ENCODE measurements at regions of chr21 and their contacts with region 1.

Region 1: GRCh38 chr21:38819714-38820183 is 14.0 kb downstream of the ETS2 start:
- DNase-seq: peak in 1 of 3 donors; percentile 50
- ATAC-seq: no peak
- H3K4me3 ChIP-seq: no peak overlapping the region
- H3K27ac ChIP-seq: peak overlapping the region; percentile 82 to 97 (median 97)
- H3K4me1 ChIP-seq: peaks cover 0 to 58% (median 25%) of the 10 kb centered on the region in 4 donors
- H3K27me3 ChIP-seq: no peaks in the 10 kb centered on the region
- CTCF ChIP-seq: no peak
- POLR2A ChIP-seq: no peak

Region 2: GRCh38 chr21:38733973-38734546 is 85.7 kb before region 1 on chr21:
- intact Hi-C with region 1: loop called in 1 of 2 experiments (anchors 10 kb)
- DNase-seq: peak; percentile 87 to 90 (median 88)
- ATAC-seq: peak; percentile 94 to 99 (median 97)
- H3K4me3 ChIP-seq: peak overlapping the region in 1 of 3 donors; percentile 17
- H3K27ac ChIP-seq: peak overlapping the region; percentile 35 to 63 (median 41)
- H3K4me1 ChIP-seq: peaks cover 0 to 3% (median 0%) of the 10 kb centered on the region in 4 donors
- H3K27me3 ChIP-seq: no peaks in the 10 kb centered on the region
- CTCF ChIP-seq: peak; percentile 94 to 95 (median 94)
- POLR2A ChIP-seq: no peak

Region 3: DNA sequence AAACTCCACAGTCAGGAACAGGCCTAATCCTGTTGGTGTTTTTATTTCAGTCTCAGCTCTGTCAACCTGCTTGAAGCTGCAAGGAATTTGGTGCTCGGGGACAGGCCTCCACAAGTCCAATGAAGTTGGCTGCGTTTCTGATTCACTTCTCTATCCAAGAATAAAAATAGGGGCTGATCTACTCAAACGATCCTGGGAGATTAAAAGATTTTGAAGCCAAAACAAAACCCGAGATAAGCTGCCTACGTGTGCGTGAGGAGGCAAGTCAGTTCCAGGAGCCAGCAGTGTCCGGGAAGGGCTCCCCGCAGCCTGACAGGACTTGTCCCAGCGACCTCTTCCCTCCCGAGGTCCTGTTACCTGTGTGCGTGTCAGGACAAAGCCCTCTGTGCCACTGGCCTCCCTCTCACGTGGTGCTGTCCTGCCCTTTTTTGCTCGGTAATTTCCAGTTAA is 84.0 kb after region 1 on chr21:
- intact Hi-C with region 1: loop called in 1 of 2 experiments (anchors 10 kb)
- DNase-seq: peak; percentile 88 to 95 (median 92)
- ATAC-seq: peak; percentile 64 to 79 (median 73)
- H3K4me3 ChIP-seq: no peak overlapping the region
- H3K27ac ChIP-seq: peak overlapping the region; percentile 90 to 98 (median 90)
- H3K4me1 ChIP-seq: peaks cover 0 to 35% (median 17%) of the 10 kb centered on the region in 4 donors
- H3K27me3 ChIP-seq: no peaks in the 10 kb centered on the region
- CTCF ChIP-seq: no peak
- POLR2A ChIP-seq: peak; percentile 71

Measured in right lobe of liver (tissue), 6 donors.